ENCODE measurements at regions of chrX and their contacts with region 1.

Region 1: GRCh38 chrX:17590892-17591740 is 146.2 kb upstream of the SCML1 start:
- DNase-seq: peak; percentile 64
- H3K4me3 ChIP-seq: peak overlapping the region in 2 of 3 experiments; percentile 19 to 28
- H3K27ac ChIP-seq: peak overlapping the region; percentile 18
- H3K4me1 ChIP-seq: peaks cover 33% of the 10 kb centered on the region
- H3K27me3 ChIP-seq: no peaks in the 10 kb centered on the region
- CTCF ChIP-seq: peak; percentile 88 to 94

Region 2: DNA sequence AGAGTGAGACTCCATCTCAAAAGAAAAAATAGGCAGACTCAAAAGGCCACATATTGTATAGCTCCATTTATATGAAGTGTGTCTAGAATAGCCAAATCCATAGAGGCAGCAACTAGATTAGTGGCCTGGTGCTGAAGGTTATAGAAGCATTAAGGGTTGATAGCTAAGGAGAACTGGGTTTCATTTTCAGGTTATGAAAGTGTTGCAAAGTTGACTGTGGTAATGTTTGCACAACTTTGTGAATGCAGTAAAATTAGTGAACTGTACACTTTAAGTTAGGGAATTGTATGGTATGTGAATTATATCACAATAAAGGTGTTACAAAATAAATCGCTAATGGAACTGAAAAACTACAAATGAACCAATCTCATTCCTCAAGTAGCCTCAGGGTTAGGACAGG is 776.5 kb before region 1 on chrX:
- CTCF ChIA-PET with region 1: no interaction called
- dilution Hi-C with region 1: no loop called
- in situ Hi-C with region 1: no loop called
- intact Hi-C with region 1: no loop called
- DNase-seq: no peak
- H3K4me3 ChIP-seq: no peak overlapping the region
- H3K27ac ChIP-seq: no peak overlapping the region
- H3K4me1 ChIP-seq: no peaks in the 10 kb centered on the region
- H3K27me3 ChIP-seq: no peaks in the 10 kb centered on the region
- CTCF ChIP-seq: no peak

Region 3: GRCh38 chrX:17242470-17242869 is 348.6 kb before region 1 on chrX:
- CTCF ChIA-PET with region 1: interaction called, 7 read pairs
- dilution Hi-C with region 1: no loop called
- in situ Hi-C with region 1: loop called (anchors 25 kb)
- intact Hi-C with region 1: loop called (anchors 1 kb)
- DNase-seq: peak; percentile 43
- H3K4me3 ChIP-seq: no peak overlapping the region
- H3K27ac ChIP-seq: no peak overlapping the region
- H3K4me1 ChIP-seq: no peaks in the 10 kb centered on the region
- H3K27me3 ChIP-seq: peaks cover 9% of the 10 kb centered on the region
- CTCF ChIP-seq: peak; percentile 81 to 90

Region 4: GRCh38 chrX:17535229-17535628 is 55.9 kb before region 1 on chrX:
- CTCF ChIA-PET with region 1: no interaction called
- dilution Hi-C with region 1: loop called (anchors 10 kb)
- in situ Hi-C with region 1: no loop called
- intact Hi-C with region 1: loop called (anchors 1 kb)
- DNase-seq: peak; percentile 32
- H3K4me3 ChIP-seq: no peak overlapping the region
- H3K27ac ChIP-seq: no peak overlapping the region
- H3K4me1 ChIP-seq: no peaks in the 10 kb centered on the region
- H3K27me3 ChIP-seq: no peaks in the 10 kb centered on the region
- CTCF ChIP-seq: peak; percentile 69 to 76

Region 5: DNA sequence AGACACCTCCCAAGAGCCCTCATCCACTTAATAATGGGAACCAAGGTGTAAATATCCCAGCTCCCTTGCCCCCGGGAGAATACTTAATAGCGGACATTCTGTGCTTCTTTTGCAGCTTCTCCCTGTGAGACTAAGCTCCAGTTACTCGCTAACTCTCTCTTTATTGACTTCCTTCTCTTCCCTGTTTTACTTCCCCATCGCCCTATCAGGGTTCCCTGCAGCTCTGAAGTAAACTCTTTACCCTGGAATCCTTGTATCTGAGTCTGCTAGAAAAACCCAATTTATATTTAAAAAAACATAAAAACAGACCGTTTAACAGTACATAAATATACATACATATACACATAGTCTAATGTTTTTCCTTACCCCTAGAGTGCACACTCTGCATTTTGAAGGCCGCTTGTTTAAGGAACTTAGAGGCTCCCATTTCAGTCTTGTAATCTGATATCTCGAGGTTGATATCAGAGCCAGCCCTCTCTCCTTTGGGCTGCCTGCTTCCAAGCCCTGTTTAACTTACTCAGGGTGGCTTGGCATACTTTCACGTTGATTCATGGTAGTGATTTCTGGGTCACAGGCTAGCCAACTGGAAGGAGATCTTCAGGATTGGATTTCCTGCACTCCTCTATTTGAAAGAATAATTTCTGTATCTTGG is 31.3 kb before region 1 on chrX:
- CTCF ChIA-PET with region 1: no interaction called
- dilution Hi-C with region 1: loop called (anchors 5 kb)
- in situ Hi-C with region 1: no loop called
- intact Hi-C with region 1: no loop called
- DNase-seq: peak; percentile 78
- H3K4me3 ChIP-seq: no peak overlapping the region
- H3K27ac ChIP-seq: peak overlapping the region; percentile 60
- H3K4me1 ChIP-seq: peaks cover 45% of the 10 kb centered on the region
- H3K27me3 ChIP-seq: no peaks in the 10 kb centered on the region
- CTCF ChIP-seq: no peak